PC-3 (cell line): ENCODE measurements at regions of chr12 and their contacts with region 1.

Region 1: GRCh38 chr12:121443193-121443870 is 43.4 kb downstream of the RNF34 start:
- DNase-seq: peak; percentile 88
- ATAC-seq: peak; percentile 99
- H3K4me3 ChIP-seq: no peak overlapping the region
- H3K27ac ChIP-seq: no peak overlapping the region
- H3K4me1 ChIP-seq: no peaks in the 10 kb centered on the region
- H3K27me3 ChIP-seq: no peaks in the 10 kb centered on the region
- CTCF ChIP-seq: peak; percentile 97

Region 2: GRCh38 chr12:121334513-121335343 is 108.6 kb before region 1 on chr12:
- CTCF ChIA-PET with region 1: interaction called, 6 read pairs
- POLR2A ChIA-PET with region 1: interaction called, 3 read pairs
- intact Hi-C with region 1: loop called (anchors 1 kb)
- DNase-seq: peak; percentile 83
- ATAC-seq: peak; percentile 88
- H3K4me3 ChIP-seq: no peak overlapping the region
- H3K27ac ChIP-seq: no peak overlapping the region
- H3K4me1 ChIP-seq: no peaks in the 10 kb centered on the region
- H3K27me3 ChIP-seq: no peaks in the 10 kb centered on the region
- CTCF ChIP-seq: peak; percentile 93

Region 3: DNA sequence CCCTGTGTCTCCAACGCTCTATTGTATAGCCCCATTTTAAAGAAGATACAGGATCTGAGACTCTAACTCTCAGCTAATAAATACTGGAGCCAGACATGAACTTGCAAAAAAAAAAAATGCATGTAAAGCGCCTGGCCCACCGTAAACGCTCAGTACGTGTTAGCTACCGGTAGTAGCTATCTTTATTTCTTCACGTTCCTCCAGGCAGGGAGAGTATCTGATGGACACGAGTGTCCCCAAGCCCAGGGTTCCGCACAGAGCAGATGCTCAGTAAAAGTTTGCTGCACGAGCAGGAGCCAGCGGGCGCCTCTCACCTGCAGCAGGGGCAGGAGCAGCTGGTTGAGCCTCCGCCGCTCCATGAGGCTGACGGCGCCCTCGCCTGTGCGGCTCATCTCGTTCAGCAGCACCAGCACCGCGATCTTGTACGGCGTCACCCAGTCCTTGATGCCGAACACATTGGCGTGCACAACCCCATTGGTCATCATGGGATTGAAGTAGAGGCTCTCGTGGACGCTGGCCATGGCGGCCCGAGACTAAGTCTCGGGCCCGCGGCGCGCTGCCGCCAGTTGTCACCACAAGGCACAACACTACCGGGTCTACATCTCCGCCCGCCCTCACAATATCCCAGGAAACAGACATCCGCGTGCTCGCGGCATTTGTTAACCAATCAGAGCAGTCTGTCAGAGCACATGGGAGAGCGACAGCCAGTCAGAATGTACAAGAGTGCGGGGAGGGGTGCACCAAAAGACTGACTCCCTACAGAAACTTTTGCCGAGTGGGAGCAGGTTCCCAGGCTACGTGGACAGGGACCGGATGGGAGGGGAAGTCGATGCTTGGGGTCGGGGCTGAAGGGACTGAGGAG is 91.3 kb before region 1 on chr12 and contains the start of gene ANAPC5:
- CTCF ChIA-PET with region 1: no interaction called
- POLR2A ChIA-PET with region 1: no interaction called
- intact Hi-C with region 1: loop called (anchors 5 kb)
- DNase-seq: peak; percentile 99
- ATAC-seq: peak; percentile 96
- H3K4me3 ChIP-seq: peak within 1 kb of the TSS; percentile 95
- H3K27ac ChIP-seq: peak within 1 kb of the TSS; percentile 48
- H3K4me1 ChIP-seq: peaks cover 11% of the 10 kb centered on the region
- H3K27me3 ChIP-seq: no peaks in the 10 kb centered on the region
- CTCF ChIP-seq: no peak
- total RNA-seq, gene ANAPC5: 171 and 199 TPM in 2 replicates